ENCODE measurements at regions of chr5 and their contacts with region 1.

Region 1: DNA sequence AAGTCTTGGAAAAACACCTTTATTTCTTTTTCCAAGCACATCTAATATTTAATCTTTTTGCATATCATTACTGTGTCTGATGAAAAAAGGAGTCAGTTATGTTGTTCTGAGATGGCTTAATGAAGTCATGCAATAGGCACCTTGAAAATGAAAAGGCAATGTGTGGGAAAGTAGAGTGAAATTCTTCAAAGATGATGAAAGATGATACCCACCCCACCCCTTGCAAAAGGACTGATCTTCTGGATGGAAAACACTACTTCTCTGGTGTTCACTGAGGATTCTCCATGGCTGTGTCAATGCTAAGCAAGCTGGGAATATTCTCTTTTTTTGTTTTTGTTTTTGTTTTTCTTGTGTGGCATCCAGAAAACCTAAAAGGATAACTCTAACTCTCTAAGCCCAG is 47.9 kb upstream of the TRPC7 start:
- DNase-seq: no peak

Region 2: DNA sequence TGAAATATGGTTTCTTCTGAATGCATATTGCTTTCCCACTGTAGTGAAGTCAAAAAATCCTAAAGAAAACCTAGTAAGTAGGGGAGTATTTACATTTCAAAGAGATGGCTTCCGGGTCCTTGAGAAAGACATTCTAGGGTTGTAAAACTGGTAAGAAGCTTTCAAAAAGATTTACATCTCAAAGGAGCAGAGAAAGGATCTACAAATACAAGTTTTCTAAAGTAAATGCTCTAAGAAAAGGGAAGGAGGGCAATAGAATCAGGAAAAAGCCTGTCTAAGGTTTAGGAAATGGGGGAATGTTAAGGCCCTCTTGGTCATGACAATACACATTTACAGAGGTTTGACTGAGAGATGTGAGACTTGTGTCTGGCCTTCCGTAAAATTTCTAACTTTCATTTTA is 31.1 kb before region 1 on chr5:
- intact Hi-C with region 1: loop called in 1 of 2 experiments (anchors 1 kb)
- DNase-seq: no peak